Breast epithelium (tissue), 4 donors: ENCODE measurements at regions of chr2 and their contacts with region 1.

Region 1: GRCh38 chr2:42102024-42102590 is 54.3 kb downstream of the PKDCC start:
- DNase-seq: peak in 1 of 2 donors; percentile 73
- H3K4me3 ChIP-seq: peak overlapping the region; percentile 38 to 78 (median 54)
- H3K27ac ChIP-seq: peak overlapping the region; percentile 89 to 92
- H3K4me1 ChIP-seq: peaks cover 0 to 8% of the 10 kb centered on the region in 2 donors
- H3K27me3 ChIP-seq: no peaks in the 10 kb centered on the region
- CTCF ChIP-seq: no peak
- POLR2A ChIP-seq: no peak

Region 2: GRCh38 chr2:41821167-41821566 is 280.9 kb before region 1 on chr2:
- intact Hi-C with region 1: no loop called
- DNase-seq: no peak
- H3K4me3 ChIP-seq: no peak overlapping the region
- H3K27ac ChIP-seq: no peak overlapping the region
- H3K4me1 ChIP-seq: no peaks in the 10 kb centered on the region
- H3K27me3 ChIP-seq: peaks cover 0 to 3% of the 10 kb centered on the region in 2 donors
- CTCF ChIP-seq: no peak
- POLR2A ChIP-seq: no peak

Region 3: GRCh38 chr2:42238644-42239288 is 136.7 kb after region 1 on chr2:
- intact Hi-C with region 1: loop called (anchors 10 kb)
- DNase-seq: peak in 1 of 2 donors; percentile 37
- H3K4me3 ChIP-seq: no peak overlapping the region
- H3K27ac ChIP-seq: peak overlapping the region in 1 of 2 donors; percentile 46
- H3K4me1 ChIP-seq: no peaks in the 10 kb centered on the region
- H3K27me3 ChIP-seq: no peaks in the 10 kb centered on the region
- CTCF ChIP-seq: peak in 2 of 3 donors; percentile 38 to 60
- POLR2A ChIP-seq: no peak